ENCODE measurements at regions of chr10 and their contacts with region 1.

Region 1: GRCh38 chr10:128069351-128070051 is 56.7 kb downstream of the MKI67 start:
- DNase-seq: peak; percentile 91
- ATAC-seq: peak; percentile 35
- H3K4me3 Mint-ChIP-seq: no peak overlapping the region
- H3K27ac Mint-ChIP-seq: no peak overlapping the region
- H3K4me1 Mint-ChIP-seq: peaks cover 39% of the 10 kb centered on the region
- H3K27me3 Mint-ChIP-seq: no peaks in the 10 kb centered on the region

Region 2: GRCh38 chr10:127715782-127716378 is 353.6 kb before region 1 on chr10:
- CTCF ChIA-PET with region 1: interaction called, 5 read pairs
- POLR2A ChIA-PET with region 1: no interaction called
- intact Hi-C with region 1: loop called in 1 of 2 experiments (anchors 10 kb)
- DNase-seq: no peak
- ATAC-seq: no peak
- H3K4me3 Mint-ChIP-seq: no peak overlapping the region
- H3K27ac Mint-ChIP-seq: no peak overlapping the region
- H3K4me1 Mint-ChIP-seq: no peaks in the 10 kb centered on the region
- H3K27me3 Mint-ChIP-seq: peaks cover 1% of the 10 kb centered on the region

Region 3: DNA sequence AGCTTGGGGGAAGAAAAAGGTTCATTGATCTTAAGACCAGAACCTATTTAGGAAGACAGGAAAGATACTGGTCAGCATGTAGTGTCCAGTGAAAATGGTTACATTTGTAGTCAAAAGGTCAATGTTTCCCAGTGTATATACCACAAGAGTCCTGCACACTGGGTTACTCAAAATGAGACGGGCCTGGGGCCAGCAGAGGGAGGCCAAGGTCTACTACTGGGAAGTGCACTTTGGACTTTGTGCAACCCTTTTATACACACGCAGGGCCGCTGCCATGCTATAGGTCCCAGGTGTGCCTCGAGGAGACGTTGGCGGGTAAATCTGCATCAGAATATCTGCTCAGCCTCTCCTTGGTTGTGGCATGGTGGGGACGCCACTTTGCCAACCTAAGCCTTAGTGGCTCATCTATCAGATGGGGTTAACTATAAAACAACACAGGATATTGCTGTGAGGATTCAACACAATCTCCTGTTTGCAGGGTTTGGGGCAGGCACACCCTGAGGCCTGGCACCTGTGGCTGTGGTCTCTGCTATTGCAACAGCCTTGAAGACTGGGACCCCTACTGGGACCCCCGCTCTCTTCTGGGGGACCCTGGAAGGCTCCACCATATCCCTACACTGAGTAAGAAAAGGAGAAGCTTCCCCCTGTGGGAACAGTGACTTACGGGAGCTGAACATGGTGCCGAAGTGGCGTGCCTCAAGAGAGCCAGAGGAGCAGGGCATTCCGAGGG is 196.5 kb before region 1 on chr10:
- CTCF ChIA-PET with region 1: no interaction called
- POLR2A ChIA-PET with region 1: no interaction called
- intact Hi-C with region 1: no loop called
- DNase-seq: no peak
- ATAC-seq: no peak
- H3K4me3 Mint-ChIP-seq: no peak overlapping the region
- H3K27ac Mint-ChIP-seq: no peak overlapping the region
- H3K4me1 Mint-ChIP-seq: no peaks in the 10 kb centered on the region
- H3K27me3 Mint-ChIP-seq: peaks cover 19% of the 10 kb centered on the region

Region 4: GRCh38 chr10:127906548-127907377 is 162.7 kb before region 1 on chr10 and contains the start of gene PTPRE:
- CTCF ChIA-PET with region 1: interaction called, 14 read pairs
- POLR2A ChIA-PET with region 1: no interaction called
- intact Hi-C with region 1: loop called (anchors 1 kb)
- DNase-seq: peak; percentile 86
- ATAC-seq: peak; percentile 98
- H3K4me3 Mint-ChIP-seq: peak within 1 kb of the TSS; percentile 35
- H3K27ac Mint-ChIP-seq: peak within 1 kb of the TSS; percentile 59
- H3K4me1 Mint-ChIP-seq: no peaks in the 10 kb centered on the region
- H3K27me3 Mint-ChIP-seq: peaks cover 21% of the 10 kb centered on the region
- total RNA-seq, gene PTPRE: 23.0 to 31.6 TPM

Region 5: GRCh38 chr10:128035557-128035973 is 33.9 kb before region 1 on chr10:
- CTCF ChIA-PET with region 1: interaction called, 120 read pairs
- POLR2A ChIA-PET with region 1: interaction called, 5 read pairs
- intact Hi-C with region 1: loop called (anchors 1 kb)
- DNase-seq: peak; percentile 81
- ATAC-seq: peak; percentile 88
- H3K4me3 Mint-ChIP-seq: no peak overlapping the region
- H3K27ac Mint-ChIP-seq: no peak overlapping the region
- H3K4me1 Mint-ChIP-seq: peaks cover 6% of the 10 kb centered on the region
- H3K27me3 Mint-ChIP-seq: no peaks in the 10 kb centered on the region

Measured in activated CD4-positive, alpha-beta T cell treated with anti-CD3 and anti-CD28 coated beads for 36 hours (primary cell).